SK-N-SH (cell line): ENCODE measurements at regions of chr11 and their contacts with region 1.

Region 1: GRCh38 chr11:69642913-69643632 is 2.1 kb downstream of the CCND1 start:
- DNase-seq: peak; percentile 84
- H3K4me3 ChIP-seq: peak overlapping the region; percentile 95 to 96
- H3K27ac ChIP-seq: peak overlapping the region; percentile 94
- H3K4me1 ChIP-seq: peaks cover 29 to 37% of the 10 kb centered on the region in 2 experiments; a peak in 3 of 4 replicates
- H3K27me3 ChIP-seq: no peaks in the 10 kb centered on the region
- CTCF ChIP-seq: peak; percentile 83
- EP300 ChIP-seq: no peak
- RAD21 ChIP-seq: peak; percentile 86

Region 2: DNA sequence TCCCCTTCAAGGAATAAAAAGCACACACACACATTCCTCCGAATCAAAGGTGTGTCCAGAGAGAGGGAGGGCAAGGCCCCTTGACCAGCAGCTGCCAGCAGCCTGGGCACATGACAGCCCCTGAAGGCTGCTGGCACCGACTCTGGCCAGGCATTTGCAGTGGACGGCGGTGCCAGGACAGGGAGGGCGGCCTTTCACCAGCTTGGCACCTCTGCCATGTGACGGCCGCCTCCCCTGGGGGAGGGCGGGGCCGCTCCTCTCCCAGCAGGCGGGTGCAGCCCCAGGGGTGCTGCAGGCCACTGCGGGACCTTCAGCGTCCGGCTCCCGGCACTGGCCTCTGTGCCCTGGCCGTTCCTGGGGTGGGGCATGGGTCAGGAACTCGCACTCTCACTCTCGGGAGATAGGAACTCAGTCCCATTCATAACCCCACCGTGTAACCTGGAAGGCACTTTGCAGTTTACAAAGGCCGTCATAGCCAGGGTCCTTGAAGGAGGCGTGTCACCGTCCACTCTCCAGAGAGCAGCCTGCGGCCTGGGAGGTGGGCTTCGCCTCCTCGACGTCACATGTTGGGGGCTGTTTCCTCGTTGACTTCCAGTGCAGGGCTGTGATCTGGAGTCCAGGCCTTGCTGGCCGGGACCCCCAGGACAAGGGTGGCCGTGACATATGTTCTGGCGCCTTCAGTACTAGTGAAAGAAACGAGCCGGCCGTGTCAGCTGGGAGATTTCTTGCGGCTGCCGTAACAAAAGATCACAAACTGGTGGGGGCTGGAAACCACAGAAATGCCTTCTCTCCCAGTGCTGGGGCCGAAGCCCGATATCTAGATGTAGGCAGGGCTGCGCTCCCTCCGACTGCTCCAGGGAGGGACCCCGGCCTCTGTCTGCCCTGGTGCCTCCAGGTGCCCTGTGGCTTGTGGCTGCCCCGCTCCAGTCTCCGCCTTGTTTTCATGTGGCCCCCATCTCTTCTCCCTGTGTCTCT is 527.2 kb before region 1 on chr11:
- CTCF ChIA-PET with region 1: interaction called, 36 read pairs
- POLR2A ChIA-PET with region 1: no interaction called
- DNase-seq: no peak
- H3K4me3 ChIP-seq: no peak overlapping the region
- H3K27ac ChIP-seq: no peak overlapping the region
- H3K4me1 ChIP-seq: no peaks in the 10 kb centered on the region; a peak in 1 of 4 replicates
- H3K27me3 ChIP-seq: no peaks in the 10 kb centered on the region
- CTCF ChIP-seq: no peak
- EP300 ChIP-seq: no peak
- RAD21 ChIP-seq: no peak

Region 3: DNA sequence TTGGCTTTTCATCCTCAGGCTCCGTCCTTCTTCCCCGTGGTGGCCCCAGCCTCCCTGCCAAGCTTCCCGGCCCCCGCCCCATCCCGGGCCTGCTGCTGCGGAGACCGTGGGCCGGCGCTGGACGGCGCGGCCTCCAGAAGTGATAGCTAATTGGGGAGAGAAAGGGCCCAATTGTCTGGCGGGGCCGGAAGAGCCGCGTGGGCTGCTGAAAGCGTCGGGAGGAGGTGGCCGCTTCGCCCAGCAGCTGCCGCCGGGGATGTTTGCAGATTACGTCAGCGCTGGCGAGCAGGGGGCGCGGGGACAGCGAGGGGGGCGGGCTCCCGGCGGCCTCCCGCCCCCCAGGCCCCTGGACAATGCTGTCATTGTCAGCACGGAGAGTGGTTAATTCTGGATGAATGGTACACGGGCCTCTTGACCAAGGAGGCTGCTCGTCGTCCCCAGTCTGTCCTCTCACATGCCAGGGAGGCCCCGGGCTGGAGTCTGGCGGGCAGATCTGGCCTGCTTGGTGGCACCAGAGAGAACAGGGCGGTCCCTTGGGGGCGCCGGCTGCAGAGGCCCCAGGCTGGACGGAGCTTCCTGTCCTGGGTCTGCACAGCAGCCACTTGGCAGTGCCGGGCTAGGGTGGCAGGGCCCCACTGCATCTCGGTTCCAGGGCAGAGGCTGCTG is 485.8 kb before region 1 on chr11:
- CTCF ChIA-PET with region 1: interaction called, 24 read pairs
- POLR2A ChIA-PET with region 1: interaction called, 6 read pairs
- DNase-seq: peak; percentile 97
- H3K4me3 ChIP-seq: no peak overlapping the region
- H3K27ac ChIP-seq: peak overlapping the region; percentile 47 to 98; a peak in 3 of 4 replicates
- H3K4me1 ChIP-seq: peaks cover 11 to 36% of the 10 kb centered on the region in 2 experiments; a peak in 2 of 4 replicates
- H3K27me3 ChIP-seq: no peaks in the 10 kb centered on the region
- CTCF ChIP-seq: no peak
- EP300 ChIP-seq: peak in 1 of 2 experiments; percentile 60; a peak in 1 of 4 replicates
- RAD21 ChIP-seq: 0 out of 2 replicates have a peak, but pooled peaks have one; percentile 7

Region 4: GRCh38 chr11:69380921-69381581 is 262.0 kb before region 1 on chr11:
- CTCF ChIA-PET with region 1: interaction called, 18 read pairs
- POLR2A ChIA-PET with region 1: interaction called, 9 read pairs
- DNase-seq: no peak
- H3K4me3 ChIP-seq: no peak overlapping the region
- H3K27ac ChIP-seq: peak overlapping the region in 1 of 2 experiments; percentile 76; a peak in 2 of 4 replicates
- H3K4me1 ChIP-seq: peaks cover 0 to 12% of the 10 kb centered on the region in 2 experiments; a peak in 1 of 4 replicates
- H3K27me3 ChIP-seq: no peaks in the 10 kb centered on the region
- CTCF ChIP-seq: no peak
- EP300 ChIP-seq: no peak
- RAD21 ChIP-seq: no peak

Region 5: GRCh38 chr11:69449320-69450063 is 193.6 kb before region 1 on chr11:
- CTCF ChIA-PET with region 1: interaction called, 13 read pairs
- POLR2A ChIA-PET with region 1: interaction called, 16 read pairs
- DNase-seq: peak; percentile 90
- H3K4me3 ChIP-seq: no peak overlapping the region
- H3K27ac ChIP-seq: peak overlapping the region in 1 of 2 experiments; percentile 76; a peak in 2 of 4 replicates
- H3K4me1 ChIP-seq: peaks cover 26 to 28% of the 10 kb centered on the region in 2 experiments; a peak in 3 of 4 replicates
- H3K27me3 ChIP-seq: no peaks in the 10 kb centered on the region
- CTCF ChIP-seq: peak; percentile 16
- EP300 ChIP-seq: peak in 1 of 2 experiments; percentile 80; a peak in 3 of 4 replicates
- RAD21 ChIP-seq: peak; percentile 31; the same call in 1 of the 2 replicates

Region 6: GRCh38 chr11:69662017-69662698 is 19.1 kb after region 1 on chr11:
- CTCF ChIA-PET with region 1: interaction called, 97 read pairs
- POLR2A ChIA-PET with region 1: interaction called, 9 read pairs
- DNase-seq: peak; percentile 61
- H3K4me3 ChIP-seq: no peak overlapping the region
- H3K27ac ChIP-seq: no peak overlapping the region
- H3K4me1 ChIP-seq: no peaks in the 10 kb centered on the region
- H3K27me3 ChIP-seq: no peaks in the 10 kb centered on the region
- CTCF ChIP-seq: peak; percentile 34
- EP300 ChIP-seq: no peak
- RAD21 ChIP-seq: no peak